Transverse colon (tissue), 4 donors: ENCODE measurements at regions of chr1 and their contacts with region 1.

Region 1: DNA sequence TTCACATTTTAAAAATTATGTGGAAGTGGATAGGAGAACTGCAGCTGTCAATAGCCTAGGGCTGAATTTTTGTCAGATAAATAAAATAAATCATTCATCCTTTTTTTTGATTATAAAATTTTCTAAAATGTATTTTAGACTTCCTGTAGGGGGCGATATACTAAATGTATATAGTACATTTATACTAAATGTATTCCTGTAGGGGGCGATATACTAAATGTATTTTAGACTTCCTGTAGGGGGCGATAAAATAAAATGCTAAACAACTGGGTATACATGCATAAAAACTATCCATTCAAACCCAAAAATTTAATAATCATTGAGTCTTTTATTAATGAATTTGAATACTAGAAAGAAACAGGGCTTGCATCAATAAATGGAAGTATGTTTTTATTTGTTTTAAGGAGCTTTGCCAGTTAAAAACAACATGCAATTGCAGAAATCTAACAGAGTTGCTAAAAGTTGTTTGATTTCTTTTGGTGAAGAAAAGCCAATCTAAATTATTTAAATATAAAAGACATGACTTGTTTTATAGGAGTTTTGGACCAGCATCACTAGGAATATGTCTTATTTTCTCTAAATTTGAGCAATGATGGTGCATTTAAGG is 31.4 kb downstream of the CLCA1 start:
- DNase-seq: no peak
- H3K4me3 ChIP-seq: no peak overlapping the region
- H3K27ac ChIP-seq: peak overlapping the region in 2 of 4 donors; percentile 9 to 62
- H3K4me1 ChIP-seq: peaks cover 2 to 44% (median 25%) of the 10 kb centered on the region in 4 donors
- H3K27me3 ChIP-seq: no peaks in the 10 kb centered on the region
- CTCF ChIP-seq: peak; percentile 88 to 98 (median 95)
- EP300 ChIP-seq: no peak
- POLR2A ChIP-seq: no peak

Region 2: DNA sequence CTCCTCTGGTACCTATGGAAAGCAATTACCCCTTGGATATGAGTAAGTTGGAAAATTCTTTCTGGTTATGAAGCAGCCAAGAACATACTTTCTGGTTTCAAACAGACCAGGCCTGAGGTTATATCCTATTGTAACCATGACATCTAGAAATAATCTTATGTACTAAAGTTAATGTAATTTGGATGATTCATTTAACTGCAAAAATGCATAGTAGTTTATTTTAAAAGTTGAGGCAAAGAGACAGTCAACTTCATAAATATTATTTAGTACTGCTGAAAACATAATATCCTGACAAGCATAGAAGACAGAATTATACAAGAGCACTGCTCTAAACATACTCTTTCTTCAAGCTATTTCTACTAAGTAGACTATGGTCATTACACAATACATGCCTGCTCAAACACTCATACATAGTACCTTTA is 129.5 kb before region 1 on chr1:
- in situ Hi-C with region 1: no loop called
- intact Hi-C with region 1: loop called (anchors 10 kb)
- DNase-seq: no peak
- H3K4me3 ChIP-seq: no peak overlapping the region
- H3K27ac ChIP-seq: no peak overlapping the region
- H3K4me1 ChIP-seq: no peaks in the 10 kb centered on the region
- H3K27me3 ChIP-seq: no peaks in the 10 kb centered on the region
- CTCF ChIP-seq: no peak
- EP300 ChIP-seq: no peak
- POLR2A ChIP-seq: no peak

Region 3: DNA sequence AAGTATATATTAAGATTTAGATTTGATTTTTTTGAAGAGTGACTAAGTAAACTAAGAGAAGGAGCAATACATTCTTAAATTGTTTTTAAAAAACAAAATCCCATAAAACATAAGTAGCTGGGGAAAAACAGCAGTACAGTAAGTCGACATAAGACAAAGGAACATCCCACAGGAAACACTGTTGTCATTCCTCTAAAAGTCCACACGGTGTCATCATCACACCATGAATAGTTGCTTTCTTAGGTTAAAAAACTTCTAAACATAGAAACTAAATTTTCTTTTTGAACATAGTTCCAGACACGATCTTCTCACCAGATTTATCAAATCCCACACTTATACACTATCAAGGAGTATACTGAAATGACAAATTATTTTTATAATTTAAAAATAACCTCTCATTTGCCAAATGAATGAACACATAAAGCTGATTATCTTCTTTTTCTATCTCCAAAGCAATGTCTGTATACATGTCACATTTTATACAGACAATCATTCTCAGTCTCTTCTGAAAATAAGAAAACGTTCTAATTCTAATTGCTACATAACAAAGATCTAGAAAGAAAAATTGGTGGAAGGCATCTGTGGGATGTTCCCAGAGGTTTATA is 119.7 kb before region 1 on chr1:
- in situ Hi-C with region 1: loop called in 1 of 4 experiments (anchors 10 kb)
- intact Hi-C with region 1: loop called (anchors 10 kb)
- DNase-seq: no peak
- H3K4me3 ChIP-seq: peak overlapping the region in 1 of 4 donors; percentile 14
- H3K27ac ChIP-seq: no peak overlapping the region
- H3K4me1 ChIP-seq: peaks cover 0 to 26% (median 3%) of the 10 kb centered on the region in 4 donors
- H3K27me3 ChIP-seq: no peaks in the 10 kb centered on the region
- CTCF ChIP-seq: peak; percentile 71 to 88 (median 81)
- EP300 ChIP-seq: no peak
- POLR2A ChIP-seq: no peak

Region 4: GRCh38 chr1:86472767-86473166 is 27.3 kb before region 1 on chr1:
- in situ Hi-C with region 1: no loop called
- intact Hi-C with region 1: no loop called
- DNase-seq: no peak
- H3K4me3 ChIP-seq: no peak overlapping the region
- H3K27ac ChIP-seq: no peak overlapping the region
- H3K4me1 ChIP-seq: no peaks in the 10 kb centered on the region
- H3K27me3 ChIP-seq: no peaks in the 10 kb centered on the region
- CTCF ChIP-seq: no peak
- EP300 ChIP-seq: no peak
- POLR2A ChIP-seq: no peak

Region 5: GRCh38 chr1:86687595-86687994 is 187.5 kb after region 1 on chr1:
- in situ Hi-C with region 1: loop called in 1 of 4 experiments (anchors 25 kb)
- intact Hi-C with region 1: no loop called
- DNase-seq: no peak
- H3K4me3 ChIP-seq: no peak overlapping the region
- H3K27ac ChIP-seq: no peak overlapping the region
- H3K4me1 ChIP-seq: no peaks in the 10 kb centered on the region
- H3K27me3 ChIP-seq: no peaks in the 10 kb centered on the region
- CTCF ChIP-seq: peak in 3 of 5 experiments; percentile 22 to 43 (median 42)
- EP300 ChIP-seq: no peak
- POLR2A ChIP-seq: no peak